CD14-positive monocyte (primary cell): ENCODE measurements at regions of chr12 and their contacts with region 1.

Region 1: GRCh38 chr12:26937875-26938700 is at the starts of genes FGFR1OP2 and INTS13:
- DNase-seq: peak; percentile 98 to 99 (median 98)
- H3K4me3 ChIP-seq: peak within 1 kb of the TSS; percentile 80 to 93 (median 90)
- H3K4me3 Mint-ChIP-seq: peak within 1 kb of the TSS; percentile 96 to 98
- H3K27ac ChIP-seq: peak within 1 kb of the TSS; percentile 92 to 93
- H3K27ac Mint-ChIP-seq: peak within 1 kb of the TSS; percentile 97 to 100 (median 100)
- H3K4me1 ChIP-seq: peaks cover 39 to 58% of the 10 kb centered on the region in 2 donors
- H3K4me1 Mint-ChIP-seq: peaks cover 57% of the 10 kb centered on the region
- H3K27me3 ChIP-seq: no peaks in the 10 kb centered on the region
- H3K27me3 Mint-ChIP-seq: peaks cover 0 to 2% (median 0%) of the 10 kb centered on the region in 3 donors
- CTCF ChIP-seq: no peak
- polyA plus RNA-seq, gene FGFR1OP2: 29.8 to 68.9 (median 66.4) TPM
- polyA plus RNA-seq, gene INTS13: 4.6 to 8.0 (median 7.5) TPM

Region 2: GRCh38 chr12:26832822-26833742 is 105.0 kb before region 1 on chr12 and contains the start of gene ITPR2:
- intact Hi-C with region 1: loop called in 1 of 2 experiments (anchors 5 kb)
- DNase-seq: peak; percentile 82 to 90 (median 87)
- H3K4me3 ChIP-seq: peak within 1 kb of the TSS; percentile 72 to 87 (median 85)
- H3K4me3 Mint-ChIP-seq: peak within 1 kb of the TSS; percentile 96 to 99
- H3K27ac ChIP-seq: peak within 1 kb of the TSS; percentile 88 to 98
- H3K27ac Mint-ChIP-seq: peak within 1 kb of the TSS; percentile 97 to 100 (median 100)
- H3K4me1 ChIP-seq: peaks cover 18 to 29% of the 10 kb centered on the region in 2 donors
- H3K4me1 Mint-ChIP-seq: peaks cover 40% of the 10 kb centered on the region
- H3K27me3 ChIP-seq: no peaks in the 10 kb centered on the region
- H3K27me3 Mint-ChIP-seq: no peaks in the 10 kb centered on the region
- CTCF ChIP-seq: peak; percentile 44
- polyA plus RNA-seq, gene ITPR2: 2.7 to 6.4 (median 5.7) TPM

Region 3: GRCh38 chr12:26953447-26953846 is 15.4 kb after region 1 on chr12:
- intact Hi-C with region 1: loop called in 1 of 2 experiments (anchors 2 kb)
- DNase-seq: peak; percentile 90 to 95 (median 94)
- H3K4me3 ChIP-seq: no peak overlapping the region
- H3K4me3 Mint-ChIP-seq: peak overlapping the region in 1 of 2 donors; percentile 39
- H3K27ac ChIP-seq: peak overlapping the region; percentile 77 to 80
- H3K27ac Mint-ChIP-seq: peak overlapping the region; percentile 85 to 96 (median 93)
- H3K4me1 ChIP-seq: peaks cover 13 to 27% of the 10 kb centered on the region in 2 donors
- H3K4me1 Mint-ChIP-seq: peaks cover 19% of the 10 kb centered on the region
- H3K27me3 ChIP-seq: no peaks in the 10 kb centered on the region
- H3K27me3 Mint-ChIP-seq: peaks cover 0 to 1% (median 0%) of the 10 kb centered on the region in 3 donors
- CTCF ChIP-seq: no peak